ENCODE measurements at regions of chr15 and their contacts with region 1.

Region 1: DNA sequence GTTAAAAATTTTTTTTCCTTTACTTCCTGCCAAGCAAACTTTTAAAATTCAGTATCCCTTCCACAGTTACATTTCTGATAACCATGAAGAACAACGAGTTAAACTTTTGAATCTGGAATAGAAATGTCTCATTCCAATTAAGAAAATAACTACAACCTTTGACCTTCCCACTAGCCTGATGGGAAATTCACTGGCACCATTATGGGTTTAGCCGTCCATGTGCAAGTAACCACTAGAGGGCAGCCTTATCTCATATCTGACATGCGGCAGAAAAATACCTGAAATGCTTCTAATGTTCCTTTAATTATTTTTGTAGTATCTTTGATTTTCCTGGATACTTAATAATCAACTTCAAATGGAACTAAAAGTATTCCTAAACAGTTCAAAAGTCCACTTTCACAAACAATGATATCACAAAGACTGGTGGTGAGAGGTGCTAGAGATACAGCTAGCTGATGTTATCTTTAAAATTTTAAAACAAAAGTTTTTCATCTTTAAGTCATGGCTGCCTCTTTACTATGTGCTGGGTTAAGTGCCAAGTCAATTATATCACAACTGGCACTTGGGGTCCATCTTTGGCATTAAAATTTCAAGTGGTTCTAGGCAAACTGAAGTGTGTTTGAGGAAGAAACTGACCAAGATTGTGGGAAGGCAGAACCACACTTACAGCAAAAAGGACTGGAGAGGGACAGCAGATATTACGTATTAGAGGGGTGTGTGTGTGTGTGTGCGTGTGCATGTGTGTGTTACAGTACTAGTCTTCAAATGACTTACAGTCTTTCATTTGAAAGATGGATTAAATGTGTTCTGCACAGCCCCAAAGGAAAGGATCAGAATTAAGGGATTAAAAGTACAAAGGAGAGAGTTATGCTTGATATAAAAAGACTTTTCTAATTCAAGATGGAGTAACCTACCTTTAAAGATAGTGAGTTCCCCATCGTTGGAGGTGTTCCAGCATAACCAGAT is 107.1 kb upstream of the ICE2 start:
- DNase-seq: no peak
- ATAC-seq: peak; percentile 84 to 86
- H3K4me3 ChIP-seq: no peak overlapping the region
- H3K27ac ChIP-seq: no peak overlapping the region
- H3K4me1 ChIP-seq: peaks cover 50% of the 10 kb centered on the region
- H3K27me3 ChIP-seq: no peaks in the 10 kb centered on the region
- CTCF ChIP-seq: peak; percentile 87

Region 2: DNA sequence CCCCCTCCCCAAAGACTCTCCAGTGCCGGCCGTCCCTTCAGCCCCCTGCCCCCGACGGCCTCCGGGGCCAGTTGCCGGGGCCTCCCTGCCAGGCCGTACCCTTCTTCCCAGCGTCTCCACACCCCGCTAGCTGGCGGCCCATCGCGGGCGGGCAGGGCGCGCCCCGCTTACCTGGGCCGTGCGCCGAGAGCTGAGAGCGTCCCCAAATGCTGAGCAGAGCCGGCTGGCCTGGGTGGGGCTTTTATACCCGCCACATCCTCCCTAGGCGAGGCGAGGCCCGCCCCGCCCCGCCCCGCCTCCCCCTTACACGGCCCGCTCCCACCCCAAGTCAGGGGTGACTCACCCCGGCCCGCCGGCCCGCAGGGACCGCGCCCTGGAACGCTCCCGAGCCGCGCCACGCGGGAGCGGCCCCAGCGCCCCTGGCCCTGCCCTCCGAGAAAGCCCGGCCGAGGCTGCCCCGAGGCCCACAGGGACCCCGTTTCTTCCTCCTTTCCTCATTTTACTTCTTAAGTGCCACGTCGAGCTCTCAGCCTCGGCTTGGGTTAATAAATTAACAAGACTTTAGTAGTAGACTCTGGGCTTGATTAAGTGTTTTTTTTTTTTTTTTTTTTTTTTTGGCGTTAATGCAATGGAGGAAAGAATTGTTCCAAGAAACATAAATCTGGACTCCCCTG is 188.1 kb before region 1 on chr15 and contains the start of gene ANXA2:
- intact Hi-C with region 1: no loop called
- DNase-seq: peak; percentile 92
- ATAC-seq: peak; percentile 88 to 94
- H3K4me3 ChIP-seq: peak within 1 kb of the TSS; percentile 78
- H3K27ac ChIP-seq: peak within 1 kb of the TSS; percentile 95
- H3K4me1 ChIP-seq: peaks cover 39% of the 10 kb centered on the region
- H3K27me3 ChIP-seq: no peaks in the 10 kb centered on the region
- CTCF ChIP-seq: no peak
- total RNA-seq, gene ANXA2: 834 TPM

Region 3: DNA sequence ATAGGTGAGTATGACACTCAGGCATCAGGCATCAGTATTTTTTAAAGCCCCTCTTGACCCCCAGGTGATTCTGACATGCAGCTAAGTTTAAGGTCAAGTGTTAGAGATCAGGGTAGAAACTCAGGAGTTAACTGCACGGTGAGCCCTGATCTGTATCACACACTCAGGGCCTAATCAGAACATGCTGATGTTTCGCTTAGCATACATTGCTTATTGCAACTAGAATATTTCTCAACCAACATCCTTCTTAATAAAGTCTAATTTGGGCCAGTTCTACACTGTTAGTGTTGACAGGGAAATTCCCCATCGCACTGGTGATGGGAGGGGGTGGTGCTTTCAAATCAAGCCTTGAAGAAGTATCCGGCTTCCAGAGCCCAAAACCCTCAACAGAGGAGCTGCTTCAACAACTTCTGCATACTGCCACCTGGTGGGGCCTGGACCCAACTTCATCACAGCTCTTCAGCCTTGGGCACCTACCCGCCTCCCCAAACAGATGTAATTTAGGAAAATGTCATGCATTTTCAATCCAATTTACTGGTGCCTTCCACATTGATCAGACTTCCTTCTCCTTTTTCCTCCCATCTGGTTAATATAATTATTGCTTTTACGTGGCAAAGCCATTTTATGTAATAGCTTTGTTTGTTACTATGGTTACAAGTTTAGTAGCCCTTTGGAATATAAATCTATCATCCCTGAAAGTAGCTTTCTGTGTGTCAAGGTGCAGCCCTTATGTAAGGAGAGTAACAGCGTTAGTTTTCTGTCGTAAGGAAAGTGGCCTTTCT is 330.8 kb after region 1 on chr15:
- intact Hi-C with region 1: loop called (anchors 5 kb)
- DNase-seq: peak; percentile 88
- ATAC-seq: peak; percentile 92 to 94
- H3K4me3 ChIP-seq: no peak overlapping the region
- H3K27ac ChIP-seq: peak overlapping the region; percentile 66
- H3K4me1 ChIP-seq: peaks cover 20% of the 10 kb centered on the region
- H3K27me3 ChIP-seq: no peaks in the 10 kb centered on the region
- CTCF ChIP-seq: peak; percentile 84